ENCODE measurements at regions of chr22 and their contacts with region 1.

Region 1: GRCh38 chr22:37498289-37498909 is 12.2 kb upstream of the MFNG start:
- DNase-seq: peak; percentile 47 to 90
- H3K4me3 ChIP-seq: no peak overlapping the region
- H3K27ac ChIP-seq: no peak overlapping the region
- H3K4me1 ChIP-seq: peaks cover 0 to 23% (median 11%) of the 10 kb centered on the region in 4 experiments; a peak in 5 of 7 replicates
- H3K27me3 ChIP-seq: no peaks in the 10 kb centered on the region
- CTCF ChIP-seq: peak; percentile 79 to 94 (median 91)
- EP300 ChIP-seq: no peak
- POLR2A ChIP-seq: no peak
- RAD21 ChIP-seq: peak; percentile 63 to 71

Region 2: GRCh38 chr22:37316875-37317371 is 181.5 kb before region 1 on chr22:
- CTCF ChIA-PET with region 1: no interaction called
- POLR2A ChIA-PET with region 1: no interaction called
- DNase-seq: peak; percentile 34 to 85
- H3K4me3 ChIP-seq: no peak overlapping the region
- H3K27ac ChIP-seq: no peak overlapping the region
- H3K4me1 ChIP-seq: peaks cover 0 to 6% (median 0%) of the 10 kb centered on the region in 4 experiments; a peak in 2 of 7 replicates
- H3K27me3 ChIP-seq: no peaks in the 10 kb centered on the region
- CTCF ChIP-seq: peak; percentile 95 to 99 (median 96)
- EP300 ChIP-seq: no peak
- POLR2A ChIP-seq: no peak
- RAD21 ChIP-seq: peak; percentile 98 to 99

Region 3: GRCh38 chr22:37486224-37486845 is 12.1 kb before region 1 on chr22 and contains the start of gene MFNG:
- CTCF ChIA-PET with region 1: interaction called, 312 read pairs
- POLR2A ChIA-PET with region 1: interaction called, 6 read pairs
- DNase-seq: peak in 1 of 2 experiments; percentile 83
- H3K4me3 ChIP-seq: peak within 1 kb of the TSS in 2 of 4 experiments; percentile 23 to 40; a peak in 3 of 8 replicates
- H3K27ac ChIP-seq: no peak within 1 kb of the TSS
- H3K4me1 ChIP-seq: peaks cover 0 to 32% (median 21%) of the 10 kb centered on the region in 4 experiments; a peak in 6 of 7 replicates
- H3K27me3 ChIP-seq: peaks cover 0 to 4% (median 0%) of the 10 kb centered on the region in 4 experiments; a peak in 1 of 7 replicates
- CTCF ChIP-seq: peak in 1 of 3 experiments; percentile 32; a peak in 1 of 4 replicates
- EP300 ChIP-seq: no peak
- POLR2A ChIP-seq: no peak
- RAD21 ChIP-seq: no peak
- total RNA-seq, gene MFNG: 1.7 and 1.8 TPM in 2 replicates

Region 4: GRCh38 chr22:37508431-37508992 is 10.1 kb after region 1 on chr22:
- CTCF ChIA-PET with region 1: interaction called, 45 read pairs
- POLR2A ChIA-PET with region 1: interaction called, 3 read pairs
- DNase-seq: no peak
- H3K4me3 ChIP-seq: no peak overlapping the region
- H3K27ac ChIP-seq: no peak overlapping the region
- H3K4me1 ChIP-seq: peaks cover 0 to 2% (median 1%) of the 10 kb centered on the region in 4 experiments; a peak in 3 of 7 replicates
- H3K27me3 ChIP-seq: no peaks in the 10 kb centered on the region; a peak in 1 of 7 replicates
- CTCF ChIP-seq: no peak; a peak in 1 of 4 replicates
- EP300 ChIP-seq: no peak
- POLR2A ChIP-seq: no peak
- RAD21 ChIP-seq: no peak; a peak in 1 of 4 replicates

Measured in H1 (cell line).